ENCODE measurements at regions of chr16 and their contacts with region 1.

Region 1: DNA sequence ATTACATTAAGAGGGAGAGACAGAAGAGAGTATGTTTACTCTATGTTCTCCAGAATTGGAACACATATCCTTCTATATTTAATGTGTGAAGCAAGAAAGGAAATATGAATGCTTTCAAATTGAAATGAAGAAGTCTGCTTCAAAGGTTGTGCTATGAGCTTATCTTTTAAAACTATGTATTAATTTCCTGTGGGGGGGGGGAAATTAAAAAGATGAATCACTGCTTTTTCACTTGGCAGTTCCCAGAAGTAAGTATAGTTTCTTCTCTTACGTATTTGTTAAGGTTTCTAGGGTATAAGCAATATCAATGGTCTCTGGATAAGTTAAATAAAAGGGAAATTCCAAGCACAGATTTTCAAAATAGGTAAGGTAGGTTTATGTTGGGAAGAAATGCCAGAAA is 7.0 kb downstream of the TERF2 start:
- DNase-seq: no peak
- ATAC-seq: no peak
- H3K4me3 ChIP-seq: no peak overlapping the region
- H3K4me3 Mint-ChIP-seq: no peak overlapping the region
- H3K27ac ChIP-seq: no peak overlapping the region
- H3K27ac Mint-ChIP-seq: peak overlapping the region; percentile 5 to 76
- H3K4me1 ChIP-seq: no peaks in the 10 kb centered on the region
- H3K4me1 Mint-ChIP-seq: peaks cover 23 to 43% (median 38%) of the 10 kb centered on the region in 3 donors
- H3K27me3 ChIP-seq: no peaks in the 10 kb centered on the region
- H3K27me3 Mint-ChIP-seq: no peaks in the 10 kb centered on the region

Region 2: GRCh38 chr16:69340109-69340644 is 38.6 kb before region 1 on chr16:
- CTCF ChIA-PET with region 1: no interaction called
- POLR2A ChIA-PET with region 1: interaction called in 1 of 2 experiments, 12 read pairs
- DNase-seq: peak in 1 of 35 experiments; percentile 37
- ATAC-seq: no peak
- H3K4me3 ChIP-seq: peak overlapping the region; percentile 87 to 88
- H3K4me3 Mint-ChIP-seq: peak overlapping the region; percentile 98 to 100 (median 100)
- H3K27ac ChIP-seq: peak overlapping the region; percentile 74
- H3K27ac Mint-ChIP-seq: peak overlapping the region; percentile 97 to 100
- H3K4me1 ChIP-seq: peaks cover 9 to 31% of the 10 kb centered on the region in 2 experiments
- H3K4me1 Mint-ChIP-seq: peaks cover 48 to 57% (median 50%) of the 10 kb centered on the region in 3 donors
- H3K27me3 ChIP-seq: no peaks in the 10 kb centered on the region
- H3K27me3 Mint-ChIP-seq: no peaks in the 10 kb centered on the region

Measured in T-cell (primary cell).